Motor neuron (in vitro differentiated cells): ENCODE measurements at regions of chr10 and their contacts with region 1.

Region 1: DNA sequence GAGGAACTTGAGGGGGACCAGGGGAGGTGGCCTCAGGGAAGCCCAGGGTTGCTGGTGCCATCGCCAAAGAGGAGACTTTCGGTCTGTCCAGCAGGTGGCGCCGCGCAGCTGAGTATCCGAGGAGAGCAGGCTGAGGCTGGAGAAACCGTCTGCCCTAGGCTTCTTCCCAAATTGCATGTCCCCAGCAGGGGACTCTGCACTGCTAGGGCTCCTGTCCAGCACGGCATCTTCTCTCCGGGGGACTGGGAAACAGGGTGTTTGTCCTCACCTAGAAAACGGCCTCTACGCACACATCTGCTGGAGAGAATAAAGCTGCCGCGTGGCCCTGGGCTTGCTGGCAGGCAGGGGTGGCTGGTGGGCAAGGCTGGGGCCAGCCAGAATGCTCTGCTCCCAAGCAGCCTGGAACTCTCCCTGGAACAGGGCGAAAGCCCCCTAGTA is 161.9 kb downstream of the SH2D4B start:
- ATAC-seq: peak; percentile 89 to 96 (median 94)
- H3K4me3 ChIP-seq: no peak overlapping the region
- H3K27ac ChIP-seq: no peak overlapping the region
- H3K4me1 ChIP-seq: peaks cover 2 to 34% of the 10 kb centered on the region in 2 donors

Region 2: GRCh38 chr10:80924063-80924952 is 224.7 kb after region 1 on chr10:
- in situ Hi-C with region 1: loop called in 2 of 9 experiments (anchors 10 to 25 kb)
- ATAC-seq: peak in 7 of 8 experiments; percentile 39 to 85 (median 57)
- H3K4me3 ChIP-seq: no peak overlapping the region
- H3K27ac ChIP-seq: no peak overlapping the region
- H3K4me1 ChIP-seq: no peaks in the 10 kb centered on the region

Region 3: DNA sequence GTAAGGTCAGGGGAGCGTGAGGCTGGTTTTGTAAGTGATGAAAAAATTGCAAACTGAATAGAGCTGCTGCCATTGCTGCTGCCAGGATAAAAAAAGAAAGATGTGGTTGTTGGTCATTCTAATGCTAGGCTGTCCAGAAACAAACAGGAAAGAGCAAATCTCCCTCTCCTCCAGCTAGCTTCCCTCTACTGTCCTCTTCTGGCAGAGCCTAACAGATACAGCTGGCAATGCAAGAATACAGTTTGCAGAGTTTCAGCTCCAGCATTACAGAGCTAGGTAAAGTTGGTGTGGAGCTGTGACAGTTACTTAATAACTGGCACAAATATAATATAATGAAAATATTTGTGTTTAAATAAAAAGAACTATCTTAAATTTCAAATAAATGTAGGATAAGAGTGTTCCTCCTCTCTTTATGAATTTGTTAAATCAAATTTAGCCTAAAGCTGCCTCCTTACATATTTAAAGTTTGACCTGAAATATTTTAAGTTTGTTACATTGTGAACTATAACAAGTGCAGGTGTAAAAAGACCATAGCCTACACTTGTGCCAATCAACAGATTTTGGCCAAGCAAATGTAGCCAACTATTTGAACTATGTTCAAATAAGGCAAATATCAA is 245.8 kb after region 1 on chr10:
- in situ Hi-C with region 1: loop called in 1 of 9 experiments (anchors 25 kb)
- ATAC-seq: peak; percentile 39 to 91 (median 68)
- H3K4me3 ChIP-seq: no peak overlapping the region
- H3K27ac ChIP-seq: no peak overlapping the region
- H3K4me1 ChIP-seq: no peaks in the 10 kb centered on the region

Region 4: DNA sequence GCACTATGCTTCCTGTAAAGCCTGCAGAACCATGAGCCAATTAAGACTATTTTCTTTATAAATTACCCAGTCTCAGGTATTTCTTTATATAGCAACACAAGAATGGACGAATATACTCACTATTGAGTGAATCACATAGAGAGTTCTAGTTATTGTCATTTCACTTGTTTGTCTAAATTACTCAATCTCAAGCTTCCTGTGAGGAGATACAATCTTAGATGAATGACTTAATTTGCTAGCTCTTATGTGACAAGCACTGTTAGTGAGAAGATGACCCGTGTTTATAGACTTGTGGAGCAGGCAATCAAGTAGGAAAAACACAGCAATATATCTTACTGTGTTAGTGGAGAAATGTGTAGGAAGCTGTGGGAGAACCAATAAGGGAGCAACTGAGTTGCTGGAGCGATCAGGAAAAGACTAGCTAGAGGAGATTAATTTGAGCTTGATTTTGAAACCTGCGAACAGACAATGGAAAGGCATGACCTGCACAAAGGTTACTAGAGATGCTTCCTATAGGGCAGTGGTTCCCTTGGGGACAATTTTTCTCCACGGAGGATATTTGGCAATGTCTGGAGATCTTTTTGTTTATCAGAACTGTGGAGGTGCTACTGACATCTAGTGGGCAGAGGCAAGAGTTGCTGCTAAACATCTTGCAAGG is 319.2 kb after region 1 on chr10:
- in situ Hi-C with region 1: loop called in 1 of 9 experiments (anchors 25 kb)
- ATAC-seq: peak; percentile 58 to 95 (median 86)
- H3K4me3 ChIP-seq: no peak overlapping the region
- H3K27ac ChIP-seq: no peak overlapping the region
- H3K4me1 ChIP-seq: no peaks in the 10 kb centered on the region